Gastrocnemius medialis (tissue), 4 donors: ENCODE measurements at regions of chr3 and their contacts with region 1.

Region 1: GRCh38 chr3:30693470-30694120 is 87.2 kb downstream of the TGFBR2 start:
- DNase-seq: no peak
- ATAC-seq: peak; percentile 82
- H3K4me3 ChIP-seq: no peak overlapping the region
- H3K27ac ChIP-seq: no peak overlapping the region
- H3K4me1 ChIP-seq: peaks cover 40 to 46% of the 10 kb centered on the region in 2 donors
- H3K27me3 ChIP-seq: no peaks in the 10 kb centered on the region
- CTCF ChIP-seq: peak; percentile 59 to 79 (median 76)
- POLR2A ChIP-seq: no peak

Region 2: GRCh38 chr3:30042274-30042859 is 651.2 kb before region 1 on chr3:
- in situ Hi-C with region 1: loop called in 1 of 4 experiments (anchors 25 kb)
- intact Hi-C with region 1: no loop called
- DNase-seq: peak; percentile 18 to 23
- ATAC-seq: peak in 1 of 2 donors; percentile 46
- H3K4me3 ChIP-seq: no peak overlapping the region
- H3K27ac ChIP-seq: no peak overlapping the region
- H3K4me1 ChIP-seq: peaks cover 0 to 4% of the 10 kb centered on the region in 2 donors
- H3K27me3 ChIP-seq: no peaks in the 10 kb centered on the region
- CTCF ChIP-seq: peak; percentile 63 to 78 (median 72)
- POLR2A ChIP-seq: no peak

Region 3: GRCh38 chr3:30112902-30113484 is 580.6 kb before region 1 on chr3:
- in situ Hi-C with region 1: loop called in 2 of 4 experiments (anchors 10 kb)
- intact Hi-C with region 1: loop called (anchors 5 kb)
- DNase-seq: no peak
- ATAC-seq: no peak
- H3K4me3 ChIP-seq: no peak overlapping the region
- H3K27ac ChIP-seq: no peak overlapping the region
- H3K4me1 ChIP-seq: no peaks in the 10 kb centered on the region
- H3K27me3 ChIP-seq: no peaks in the 10 kb centered on the region
- CTCF ChIP-seq: peak; percentile 38 to 64 (median 50)
- POLR2A ChIP-seq: no peak

Region 4: GRCh38 chr3:30286007-30286669 is 407.5 kb before region 1 on chr3:
- in situ Hi-C with region 1: no loop called
- intact Hi-C with region 1: loop called (anchors 10 kb)
- DNase-seq: peak; percentile 65
- ATAC-seq: peak; percentile 88 to 95
- H3K4me3 ChIP-seq: no peak overlapping the region
- H3K27ac ChIP-seq: peak overlapping the region; percentile 39 to 73 (median 51)
- H3K4me1 ChIP-seq: peaks cover 12 to 38% of the 10 kb centered on the region in 2 donors
- H3K27me3 ChIP-seq: no peaks in the 10 kb centered on the region
- CTCF ChIP-seq: no peak
- POLR2A ChIP-seq: no peak

Region 5: DNA sequence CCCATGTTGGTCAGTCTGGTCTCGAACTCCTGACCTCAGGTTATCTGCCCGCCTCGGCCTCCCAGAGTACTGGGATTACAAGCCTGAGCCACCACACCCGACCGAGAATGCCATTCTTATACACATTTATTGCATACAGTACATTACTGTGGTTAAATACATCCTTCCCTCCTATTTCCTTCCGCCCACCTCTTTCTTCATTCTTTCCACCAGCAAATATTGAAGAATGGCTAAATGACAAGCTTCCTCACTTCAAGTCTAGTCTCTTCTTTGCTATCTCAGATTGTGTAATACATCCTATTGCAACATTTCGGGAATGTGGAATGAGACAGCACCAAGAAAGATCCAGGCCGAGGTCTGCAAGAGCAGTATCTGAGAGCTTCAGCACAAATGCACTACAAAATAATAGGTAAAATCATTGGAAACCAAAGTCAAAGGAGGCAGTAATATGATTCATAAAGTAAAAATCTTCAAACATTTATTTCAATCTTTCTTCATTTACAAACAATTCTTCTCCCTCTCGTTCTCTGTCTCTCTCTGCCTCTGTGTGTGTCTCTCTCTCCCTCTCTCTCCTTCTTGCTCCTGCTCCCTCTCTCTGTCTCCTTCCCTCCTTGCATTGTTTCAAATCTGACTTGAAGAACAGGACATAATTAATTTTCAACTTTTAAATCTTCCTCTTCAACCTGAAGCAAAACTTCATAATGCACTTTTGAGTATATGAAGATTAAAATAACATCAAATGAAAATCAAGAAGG is 181.9 kb before region 1 on chr3:
- in situ Hi-C with region 1: loop called in 1 of 4 experiments (anchors 25 kb)
- intact Hi-C with region 1: loop called (anchors 10 kb)
- DNase-seq: peak; percentile 23 to 27
- ATAC-seq: peak; percentile 96 to 97
- H3K4me3 ChIP-seq: no peak overlapping the region
- H3K27ac ChIP-seq: peak overlapping the region in 3 of 4 donors; percentile 15 to 40 (median 24)
- H3K4me1 ChIP-seq: peaks cover 0 to 9% of the 10 kb centered on the region in 2 donors
- H3K27me3 ChIP-seq: no peaks in the 10 kb centered on the region
- CTCF ChIP-seq: no peak
- POLR2A ChIP-seq: no peak

Region 6: GRCh38 chr3:30786365-30786764 is 92.8 kb after region 1 on chr3:
- in situ Hi-C with region 1: no loop called
- intact Hi-C with region 1: no loop called
- DNase-seq: no peak
- ATAC-seq: no peak
- H3K4me3 ChIP-seq: no peak overlapping the region
- H3K27ac ChIP-seq: no peak overlapping the region
- H3K4me1 ChIP-seq: no peaks in the 10 kb centered on the region
- H3K27me3 ChIP-seq: no peaks in the 10 kb centered on the region
- CTCF ChIP-seq: no peak
- POLR2A ChIP-seq: no peak

Region 7: DNA sequence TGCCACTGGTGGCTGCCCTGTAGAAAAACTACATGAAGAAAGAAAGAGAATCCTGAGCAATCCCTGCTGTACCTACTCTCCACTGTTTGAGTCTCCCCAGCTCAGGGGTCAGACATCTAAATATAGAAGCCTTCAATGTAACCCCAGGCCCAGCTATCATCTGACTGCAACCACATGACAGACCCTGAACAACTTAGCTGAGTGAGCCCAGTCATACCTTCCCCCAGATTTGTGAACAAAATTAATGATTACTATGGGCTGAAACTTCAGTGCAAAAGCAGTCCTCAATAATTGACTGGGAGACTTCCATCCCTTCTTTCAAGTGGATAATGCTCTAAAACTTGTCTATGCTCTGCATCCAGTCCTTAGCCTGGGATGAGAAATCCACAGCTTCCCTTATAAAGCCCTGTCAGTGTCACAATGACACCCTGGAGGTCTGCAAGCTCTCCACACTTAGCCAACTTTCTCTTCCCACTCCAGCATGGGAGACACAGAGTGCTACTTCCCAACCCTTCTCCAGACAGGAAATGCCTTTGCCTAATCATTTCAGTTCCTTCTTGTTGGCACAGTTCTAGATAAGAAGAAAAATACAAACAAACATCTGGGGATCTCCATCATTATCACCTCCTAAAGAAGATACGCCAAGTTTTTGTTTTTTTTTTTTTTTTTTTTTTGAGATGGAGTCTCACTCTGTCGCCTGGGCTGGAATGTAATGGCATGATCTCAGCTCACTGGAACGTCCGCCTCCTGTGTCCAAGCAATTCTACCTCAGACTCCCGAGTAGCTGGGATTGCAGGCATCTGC is 399.4 kb after region 1 on chr3:
- in situ Hi-C with region 1: no loop called
- intact Hi-C with region 1: no loop called
- DNase-seq: peak; percentile 2 to 51
- ATAC-seq: peak; percentile 63 to 87
- H3K4me3 ChIP-seq: no peak overlapping the region
- H3K27ac ChIP-seq: peak overlapping the region in 2 of 4 donors; percentile 7 to 50
- H3K4me1 ChIP-seq: peaks cover 11 to 19% of the 10 kb centered on the region in 2 donors
- H3K27me3 ChIP-seq: no peaks in the 10 kb centered on the region
- CTCF ChIP-seq: no peak
- POLR2A ChIP-seq: no peak